H1 (cell line): ENCODE measurements at regions of chrX and their contacts with region 1.

Region 1: GRCh38 chrX:120213436-120214265 is 37.0 kb upstream of the ZBTB33 start:
- DNase-seq: peak; percentile 17 to 72
- H3K4me3 ChIP-seq: no peak overlapping the region
- H3K27ac ChIP-seq: no peak overlapping the region
- H3K4me1 ChIP-seq: no peaks in the 10 kb centered on the region
- H3K27me3 ChIP-seq: no peaks in the 10 kb centered on the region
- CTCF ChIP-seq: peak; percentile 24 to 93 (median 76)
- EP300 ChIP-seq: no peak
- POLR2A ChIP-seq: no peak
- RAD21 ChIP-seq: peak; percentile 65 to 80

Region 2: GRCh38 chrX:120200851-120201250 is 12.8 kb before region 1 on chrX:
- CTCF ChIA-PET with region 1: interaction called, 17 read pairs
- POLR2A ChIA-PET with region 1: no interaction called
- DNase-seq: no peak
- H3K4me3 ChIP-seq: no peak overlapping the region
- H3K27ac ChIP-seq: no peak overlapping the region
- H3K4me1 ChIP-seq: no peaks in the 10 kb centered on the region
- H3K27me3 ChIP-seq: no peaks in the 10 kb centered on the region
- CTCF ChIP-seq: no peak
- EP300 ChIP-seq: no peak
- POLR2A ChIP-seq: no peak
- RAD21 ChIP-seq: no peak

Region 3: GRCh38 chrX:120228187-120228908 is 14.7 kb after region 1 on chrX:
- CTCF ChIA-PET with region 1: interaction called, 19 read pairs
- POLR2A ChIA-PET with region 1: interaction called, 3 read pairs
- DNase-seq: no peak
- H3K4me3 ChIP-seq: no peak overlapping the region
- H3K27ac ChIP-seq: no peak overlapping the region
- H3K4me1 ChIP-seq: no peaks in the 10 kb centered on the region
- H3K27me3 ChIP-seq: no peaks in the 10 kb centered on the region
- CTCF ChIP-seq: no peak
- EP300 ChIP-seq: no peak
- POLR2A ChIP-seq: no peak
- RAD21 ChIP-seq: no peak